ENCODE measurements at regions of chr14 and their contacts with region 1.

Region 1: GRCh38 chr14:68548194-68549056 is 244.4 kb downstream of the ZFP36L1 start:
- DNase-seq: peak; percentile 96
- H3K4me3 ChIP-seq: no peak overlapping the region
- H3K27ac ChIP-seq: peak overlapping the region; percentile 100
- H3K27me3 ChIP-seq: no peaks in the 10 kb centered on the region
- CTCF ChIP-seq: no peak

Region 2: GRCh38 chr14:68361231-68361630 is 187.2 kb before region 1 on chr14:
- CTCF ChIA-PET with region 1: no interaction called
- POLR2A ChIA-PET with region 1: interaction called, 11 read pairs
- DNase-seq: no peak
- H3K4me3 ChIP-seq: no peak overlapping the region
- H3K27ac ChIP-seq: no peak overlapping the region
- H3K27me3 ChIP-seq: no peaks in the 10 kb centered on the region
- CTCF ChIP-seq: no peak

Region 3: GRCh38 chr14:68535404-68536017 is 12.9 kb before region 1 on chr14:
- CTCF ChIA-PET with region 1: no interaction called
- POLR2A ChIA-PET with region 1: interaction called, 10 read pairs
- DNase-seq: peak; percentile 59
- H3K4me3 ChIP-seq: no peak overlapping the region
- H3K27ac ChIP-seq: peak overlapping the region; percentile 65
- H3K27me3 ChIP-seq: no peaks in the 10 kb centered on the region
- CTCF ChIP-seq: no peak